ENCODE measurements at regions of chr4 and their contacts with region 1.

Region 1: DNA sequence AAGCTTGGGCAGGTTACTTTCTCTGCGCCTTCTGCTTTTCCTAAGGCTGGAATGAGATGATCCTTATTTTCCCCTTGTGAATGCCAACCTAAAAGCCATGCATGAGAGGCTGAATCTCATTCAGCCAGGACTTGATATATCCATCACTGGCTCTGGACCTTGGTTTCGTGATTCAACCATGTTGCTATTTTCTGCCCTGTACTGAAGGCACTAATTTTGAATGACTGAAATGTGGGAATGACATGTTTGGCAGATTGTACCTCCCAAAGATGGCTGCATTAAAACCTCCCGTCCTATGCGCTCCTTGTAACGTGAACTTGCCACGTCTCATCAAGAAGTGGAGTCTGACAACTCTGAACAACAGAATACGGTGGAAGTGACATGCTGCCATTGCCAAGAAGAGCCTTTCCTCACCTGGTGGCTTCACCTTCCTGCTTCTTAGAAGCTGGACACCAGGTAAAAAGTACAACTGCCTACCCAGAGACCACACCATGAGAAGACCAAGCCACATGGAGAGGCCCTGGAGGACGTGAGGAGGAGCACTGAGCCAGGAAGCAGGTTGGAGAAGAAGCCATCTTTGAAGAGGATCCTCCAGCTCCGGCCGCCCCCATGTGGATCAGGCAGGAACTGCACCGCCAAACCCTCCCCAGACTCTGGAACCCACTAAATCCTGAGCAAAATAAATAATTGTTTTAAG is 174.5 kb downstream of the NSUN7 start:
- DNase-seq: peak in 1 of 2 experiments; percentile 93
- H3K4me3 ChIP-seq: no peak overlapping the region
- H3K27ac ChIP-seq: no peak overlapping the region
- H3K4me1 ChIP-seq: peaks cover 0 to 5% (median 0%) of the 10 kb centered on the region in 4 experiments; a peak in 3 of 7 replicates
- H3K27me3 ChIP-seq: no peaks in the 10 kb centered on the region
- CTCF ChIP-seq: peak; percentile 74 to 84 (median 83)
- EP300 ChIP-seq: no peak
- POLR2A ChIP-seq: no peak
- RAD21 ChIP-seq: peak; percentile 54 to 69

Region 2: DNA sequence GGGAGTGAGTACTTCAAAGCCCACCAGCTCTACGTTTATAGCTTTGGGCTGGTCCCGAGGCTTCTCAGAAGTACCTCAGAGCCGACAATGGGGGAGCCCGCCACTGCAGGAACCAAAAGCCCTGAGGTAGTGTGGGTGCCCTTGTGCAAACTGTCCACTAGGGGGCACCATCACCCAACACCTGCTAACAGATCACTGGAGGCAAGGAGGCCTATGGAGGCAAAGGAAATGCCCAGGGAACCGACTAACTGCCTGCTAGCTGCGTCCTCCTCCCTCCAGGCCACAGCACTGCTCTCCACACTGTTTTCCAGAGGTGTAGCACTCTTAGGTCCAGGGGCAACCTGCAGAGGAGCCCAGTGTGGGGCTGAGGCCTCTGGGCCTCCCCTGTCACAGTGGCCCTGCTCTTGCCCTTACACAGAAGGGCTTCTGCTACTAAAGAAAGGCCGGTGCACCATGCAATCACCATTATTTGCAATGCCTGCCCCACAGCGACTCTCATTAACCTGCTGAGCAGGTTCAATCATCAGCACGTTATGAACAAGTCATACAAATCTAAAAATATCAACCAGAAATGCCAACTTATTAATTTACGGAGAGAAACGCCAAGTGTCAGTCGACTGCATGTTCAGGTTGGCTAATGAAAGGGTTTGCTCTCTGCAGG is 15.4 kb before region 1 on chr4:
- CTCF ChIA-PET with region 1: interaction called, 224 read pairs
- POLR2A ChIA-PET with region 1: interaction called, 4 read pairs
- DNase-seq: peak; percentile 69 to 88
- H3K4me3 ChIP-seq: no peak overlapping the region
- H3K27ac ChIP-seq: no peak overlapping the region
- H3K4me1 ChIP-seq: peaks cover 0 to 7% (median 4%) of the 10 kb centered on the region in 4 experiments; a peak in 5 of 7 replicates
- H3K27me3 ChIP-seq: no peaks in the 10 kb centered on the region
- CTCF ChIP-seq: peak; percentile 98 to 100 (median 99)
- EP300 ChIP-seq: no peak
- POLR2A ChIP-seq: no peak
- RAD21 ChIP-seq: peak; percentile 87 to 90

Region 3: GRCh38 chr4:40960941-40961340 is 36.7 kb after region 1 on chr4:
- CTCF ChIA-PET with region 1: interaction called, 13 read pairs
- POLR2A ChIA-PET with region 1: no interaction called
- DNase-seq: peak in 1 of 2 experiments; percentile 11
- H3K4me3 ChIP-seq: no peak overlapping the region
- H3K27ac ChIP-seq: no peak overlapping the region
- H3K4me1 ChIP-seq: peaks cover 0 to 7% (median 2%) of the 10 kb centered on the region in 4 experiments; a peak in 3 of 7 replicates
- H3K27me3 ChIP-seq: no peaks in the 10 kb centered on the region
- CTCF ChIP-seq: no peak
- EP300 ChIP-seq: no peak
- POLR2A ChIP-seq: no peak
- RAD21 ChIP-seq: no peak

Region 4: GRCh38 chr4:41015016-41015675 is 90.9 kb after region 1 on chr4:
- CTCF ChIA-PET with region 1: interaction called, 10 read pairs
- POLR2A ChIA-PET with region 1: no interaction called
- DNase-seq: no peak
- H3K4me3 ChIP-seq: no peak overlapping the region
- H3K27ac ChIP-seq: no peak overlapping the region
- H3K4me1 ChIP-seq: peaks cover 0 to 5% (median 0%) of the 10 kb centered on the region in 4 experiments; a peak in 2 of 7 replicates
- H3K27me3 ChIP-seq: no peaks in the 10 kb centered on the region
- CTCF ChIP-seq: no peak
- EP300 ChIP-seq: no peak
- POLR2A ChIP-seq: no peak
- RAD21 ChIP-seq: no peak

Region 5: DNA sequence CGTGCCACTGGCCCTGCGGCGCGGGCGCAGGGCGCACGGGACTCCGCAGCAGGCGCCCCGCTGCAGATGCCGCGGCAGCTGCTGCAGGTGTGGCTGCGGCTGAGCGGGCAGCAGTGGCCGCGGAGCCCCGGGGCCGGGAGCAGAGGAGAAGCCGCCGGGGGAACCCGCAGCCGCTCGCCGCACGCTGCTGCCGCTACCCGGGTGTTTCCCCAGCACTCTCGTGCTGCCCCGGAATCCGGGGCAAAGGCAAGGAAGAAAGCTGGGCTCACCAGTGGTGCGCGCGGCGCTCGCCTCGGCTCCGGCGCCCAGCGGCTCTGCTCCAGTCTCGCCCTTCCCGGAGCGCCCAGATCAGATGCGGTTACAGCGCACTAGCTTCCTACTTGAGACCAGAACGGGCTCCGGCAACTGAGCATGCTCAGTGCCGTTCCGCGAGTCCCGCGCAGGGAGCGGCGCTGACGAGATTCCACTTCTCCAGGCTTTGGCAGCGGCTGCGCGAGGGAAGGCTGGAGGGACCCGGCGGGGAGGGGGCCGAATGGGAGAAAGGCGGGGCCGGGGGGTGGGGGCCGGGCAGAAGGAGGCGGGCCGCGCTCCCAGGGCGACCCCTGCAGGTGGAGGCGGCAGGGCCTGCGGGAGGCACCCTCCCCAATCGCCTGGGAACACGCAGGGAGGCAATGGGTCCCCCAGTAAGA is 290.0 kb after region 1 on chr4 and contains the start of gene APBB2:
- CTCF ChIA-PET with region 1: interaction called, 17 read pairs
- POLR2A ChIA-PET with region 1: interaction called, 7 read pairs
- DNase-seq: peak; percentile 94 to 95
- H3K4me3 ChIP-seq: peak within 1 kb of the TSS; percentile 55 to 88 (median 85)
- H3K27ac ChIP-seq: 0 out of 2 replicates have a peak within 1 kb of the TSS, but pooled peaks have one; percentile 48
- H3K4me1 ChIP-seq: peaks cover 3 to 12% (median 6%) of the 10 kb centered on the region in 4 experiments; a peak in 6 of 7 replicates
- H3K27me3 ChIP-seq: no peaks in the 10 kb centered on the region; a peak in 1 of 7 replicates
- CTCF ChIP-seq: peak; percentile 67 to 93 (median 70)
- EP300 ChIP-seq: no peak
- POLR2A ChIP-seq: peak in 1 of 2 experiments; percentile 83; a peak in 2 of 3 replicates
- RAD21 ChIP-seq: peak; percentile 74 to 75
- total RNA-seq, gene APBB2: 59.4 and 64.0 TPM in 2 replicates

Measured in H1 (cell line).